OCI-LY7 (cell line): ENCODE measurements at regions of chr11 and their contacts with region 1.

Region 1: GRCh38 chr11:126510621-126511370 is 155.3 kb downstream of the ST3GAL4 start:
- DNase-seq: no peak
- H3K4me3 ChIP-seq: no peak overlapping the region
- H3K27ac ChIP-seq: no peak overlapping the region
- H3K4me1 ChIP-seq: no peaks in the 10 kb centered on the region
- CTCF ChIP-seq: no peak

Region 2: GRCh38 chr11:126840201-126840886 is 329.5 kb after region 1 on chr11:
- CTCF ChIA-PET with region 1: no interaction called
- POLR2A ChIA-PET with region 1: no interaction called
- intact Hi-C with region 1: no loop called
- DNase-seq: no peak
- H3K4me3 ChIP-seq: no peak overlapping the region
- H3K27ac ChIP-seq: no peak overlapping the region
- H3K4me1 ChIP-seq: no peaks in the 10 kb centered on the region
- CTCF ChIP-seq: no peak

Region 3: GRCh38 chr11:127420139-127420538 is 909.3 kb after region 1 on chr11:
- CTCF ChIA-PET with region 1: no interaction called
- POLR2A ChIA-PET with region 1: interaction called, 10 read pairs
- intact Hi-C with region 1: no loop called
- DNase-seq: no peak
- H3K4me3 ChIP-seq: no peak overlapping the region
- H3K27ac ChIP-seq: no peak overlapping the region
- H3K4me1 ChIP-seq: no peaks in the 10 kb centered on the region
- CTCF ChIP-seq: no peak